Activated naive CD4-positive, alpha-beta T cell treated with anti-CD3 and anti-CD28 coated beads for 36 hours (primary cell): ENCODE measurements at regions of chr11 and their contacts with region 1.

Region 1: GRCh38 chr11:96464700-96465307 is 75.0 kb downstream of the JRKL start:
- DNase-seq: no peak
- H3K4me3 Mint-ChIP-seq: no peak overlapping the region
- H3K27ac Mint-ChIP-seq: no peak overlapping the region
- H3K4me1 Mint-ChIP-seq: no peaks in the 10 kb centered on the region
- H3K27me3 Mint-ChIP-seq: peaks cover under 1% of the 10 kb centered on the region

Region 2: GRCh38 chr11:95977534-95978174 is 487.1 kb before region 1 on chr11:
- CTCF ChIA-PET with region 1: no interaction called
- intact Hi-C with region 1: no loop called
- DNase-seq: no peak
- H3K4me3 Mint-ChIP-seq: no peak overlapping the region
- H3K27ac Mint-ChIP-seq: no peak overlapping the region
- H3K4me1 Mint-ChIP-seq: no peaks in the 10 kb centered on the region
- H3K27me3 Mint-ChIP-seq: no peaks in the 10 kb centered on the region

Region 3: DNA sequence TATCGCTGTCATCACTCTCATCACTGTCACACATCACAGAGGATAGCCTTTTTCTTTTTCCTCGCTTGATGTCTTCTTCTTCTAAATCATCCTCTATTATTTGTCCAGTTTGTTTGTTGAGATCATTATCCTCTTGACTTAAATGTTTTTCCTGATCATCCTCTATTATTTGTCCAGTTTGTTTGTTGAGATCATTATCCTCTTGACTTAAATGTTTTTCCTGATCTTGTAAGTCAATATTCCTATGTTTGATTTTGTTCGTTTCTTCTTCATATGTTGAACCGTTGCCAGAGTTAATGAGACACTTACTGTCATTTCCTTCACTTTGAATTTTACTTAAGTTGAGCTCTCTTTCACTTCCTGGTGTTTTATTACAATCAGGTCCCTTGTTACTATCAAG is 80.7 kb before region 1 on chr11:
- CTCF ChIA-PET with region 1: no interaction called
- intact Hi-C with region 1: no loop called
- DNase-seq: no peak
- H3K4me3 Mint-ChIP-seq: peak overlapping the region; percentile 56
- H3K27ac Mint-ChIP-seq: peak overlapping the region; percentile 84
- H3K4me1 Mint-ChIP-seq: peaks cover 41% of the 10 kb centered on the region
- H3K27me3 Mint-ChIP-seq: no peaks in the 10 kb centered on the region

Region 4: DNA sequence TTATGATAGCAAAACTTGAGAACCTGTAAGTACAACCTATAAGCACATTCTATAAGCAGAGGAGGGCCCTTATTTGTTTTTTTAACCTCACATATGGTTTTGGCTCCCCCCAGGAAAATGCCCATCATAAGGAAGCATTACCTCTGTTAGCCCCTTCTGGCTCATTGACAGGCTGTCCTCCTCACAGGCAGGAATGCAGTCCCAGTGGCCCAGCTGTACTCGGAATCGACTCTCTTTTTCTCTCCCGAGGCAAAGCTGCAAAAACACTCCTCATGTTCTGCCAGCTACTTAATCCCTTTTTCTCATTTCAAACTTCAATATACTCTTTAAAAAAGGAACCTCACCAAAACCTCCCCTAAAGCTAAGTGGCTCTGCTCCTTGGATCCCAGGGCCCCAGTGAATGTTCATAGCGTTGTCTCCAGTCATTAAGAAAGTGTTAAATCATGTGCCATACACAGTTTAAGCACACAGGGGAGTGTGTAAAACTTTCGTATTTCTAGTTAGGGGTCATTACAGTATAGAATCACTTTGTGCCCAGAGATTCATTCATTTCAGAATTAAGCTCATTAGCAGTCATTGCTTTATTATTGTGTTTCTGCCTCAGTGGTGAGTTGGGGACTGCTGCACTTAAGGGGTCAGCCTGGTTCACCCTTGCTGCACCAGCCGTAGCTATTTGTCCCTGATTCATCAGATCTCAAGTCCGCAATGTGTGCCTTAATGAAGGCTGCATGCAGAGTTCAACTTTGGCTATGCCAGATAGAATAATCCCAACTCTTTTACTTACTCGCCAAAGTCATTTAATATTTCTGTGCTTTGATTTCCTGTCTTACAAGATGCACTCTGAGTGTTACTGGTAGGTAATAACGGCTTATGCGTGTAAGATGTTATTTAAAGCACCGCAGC is 17.3 kb before region 1 on chr11:
- CTCF ChIA-PET with region 1: interaction called, 14 read pairs
- intact Hi-C with region 1: no loop called
- DNase-seq: no peak
- H3K4me3 Mint-ChIP-seq: no peak overlapping the region
- H3K27ac Mint-ChIP-seq: no peak overlapping the region
- H3K4me1 Mint-ChIP-seq: no peaks in the 10 kb centered on the region
- H3K27me3 Mint-ChIP-seq: peaks cover 5% of the 10 kb centered on the region

Region 5: GRCh38 chr11:96481771-96482170 is 17.0 kb after region 1 on chr11:
- CTCF ChIA-PET with region 1: interaction called, 22 read pairs
- intact Hi-C with region 1: no loop called
- DNase-seq: no peak
- H3K4me3 Mint-ChIP-seq: no peak overlapping the region
- H3K27ac Mint-ChIP-seq: no peak overlapping the region
- H3K4me1 Mint-ChIP-seq: no peaks in the 10 kb centered on the region
- H3K27me3 Mint-ChIP-seq: peaks cover 9% of the 10 kb centered on the region

Region 6: GRCh38 chr11:97140885-97141494 is 676.2 kb after region 1 on chr11:
- CTCF ChIA-PET with region 1: interaction called, 4 read pairs
- intact Hi-C with region 1: loop called (anchors 2 kb)
- DNase-seq: no peak
- H3K4me3 Mint-ChIP-seq: no peak overlapping the region
- H3K27ac Mint-ChIP-seq: no peak overlapping the region
- H3K4me1 Mint-ChIP-seq: no peaks in the 10 kb centered on the region
- H3K27me3 Mint-ChIP-seq: no peaks in the 10 kb centered on the region